ENCODE measurements at regions of chr10 and their contacts with region 1.

Region 1: GRCh38 chr10:17607603-17608332 is 9.4 kb downstream of the HACD1 start:
- DNase-seq: peak; percentile 45
- ATAC-seq: peak; percentile 88
- H3K4me3 ChIP-seq: no peak overlapping the region
- H3K27ac ChIP-seq: no peak overlapping the region
- H3K4me1 ChIP-seq: no peaks in the 10 kb centered on the region
- H3K27me3 ChIP-seq: no peaks in the 10 kb centered on the region
- CTCF ChIP-seq: peak; percentile 86
- EP300 ChIP-seq: no peak
- POLR2A ChIP-seq: no peak
- RAD21 ChIP-seq: peak; percentile 66

Region 2: GRCh38 chr10:17144757-17145156 is 463.0 kb before region 1 on chr10:
- CTCF ChIA-PET with region 1: no interaction called
- POLR2A ChIA-PET with region 1: no interaction called
- in situ Hi-C with region 1: no loop called
- intact Hi-C with region 1: no loop called
- DNase-seq: no peak
- ATAC-seq: no peak
- H3K4me3 ChIP-seq: no peak overlapping the region
- H3K27ac ChIP-seq: no peak overlapping the region
- H3K4me1 ChIP-seq: peaks cover 24% of the 10 kb centered on the region
- H3K27me3 ChIP-seq: no peaks in the 10 kb centered on the region
- CTCF ChIP-seq: no peak
- EP300 ChIP-seq: no peak
- POLR2A ChIP-seq: no peak
- RAD21 ChIP-seq: no peak

Region 3: DNA sequence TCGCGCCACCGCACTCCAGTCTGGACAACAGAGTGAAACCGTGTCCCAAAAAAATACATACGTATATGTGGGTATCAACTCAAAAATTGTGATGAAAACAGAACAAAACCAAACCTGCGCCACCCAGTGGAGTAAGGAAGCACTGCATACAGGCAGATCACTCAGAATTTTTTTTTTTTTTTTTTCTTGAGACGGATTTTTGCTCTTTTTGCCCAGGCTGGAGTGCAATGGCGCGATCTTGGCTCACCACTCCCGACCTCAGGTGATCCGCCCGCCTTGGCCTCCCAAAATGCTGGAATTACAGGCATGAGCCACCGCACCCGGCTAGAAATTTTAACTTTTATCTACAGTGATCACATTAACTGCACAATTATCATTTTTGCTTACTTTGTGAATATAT is 135.2 kb after region 1 on chr10:
- CTCF ChIA-PET with region 1: interaction called, 43 read pairs
- POLR2A ChIA-PET with region 1: no interaction called
- in situ Hi-C with region 1: loop called (anchors 5 kb)
- intact Hi-C with region 1: loop called (anchors 1 kb)
- DNase-seq: peak; percentile 30
- ATAC-seq: no peak
- H3K4me3 ChIP-seq: no peak overlapping the region
- H3K27ac ChIP-seq: no peak overlapping the region
- H3K4me1 ChIP-seq: peaks cover 17% of the 10 kb centered on the region
- H3K27me3 ChIP-seq: no peaks in the 10 kb centered on the region; a peak in 1 of 5 replicates
- CTCF ChIP-seq: peak; percentile 69
- EP300 ChIP-seq: no peak
- POLR2A ChIP-seq: no peak
- RAD21 ChIP-seq: peak; percentile 38; the same call in 1 of the 2 replicates

Region 4: DNA sequence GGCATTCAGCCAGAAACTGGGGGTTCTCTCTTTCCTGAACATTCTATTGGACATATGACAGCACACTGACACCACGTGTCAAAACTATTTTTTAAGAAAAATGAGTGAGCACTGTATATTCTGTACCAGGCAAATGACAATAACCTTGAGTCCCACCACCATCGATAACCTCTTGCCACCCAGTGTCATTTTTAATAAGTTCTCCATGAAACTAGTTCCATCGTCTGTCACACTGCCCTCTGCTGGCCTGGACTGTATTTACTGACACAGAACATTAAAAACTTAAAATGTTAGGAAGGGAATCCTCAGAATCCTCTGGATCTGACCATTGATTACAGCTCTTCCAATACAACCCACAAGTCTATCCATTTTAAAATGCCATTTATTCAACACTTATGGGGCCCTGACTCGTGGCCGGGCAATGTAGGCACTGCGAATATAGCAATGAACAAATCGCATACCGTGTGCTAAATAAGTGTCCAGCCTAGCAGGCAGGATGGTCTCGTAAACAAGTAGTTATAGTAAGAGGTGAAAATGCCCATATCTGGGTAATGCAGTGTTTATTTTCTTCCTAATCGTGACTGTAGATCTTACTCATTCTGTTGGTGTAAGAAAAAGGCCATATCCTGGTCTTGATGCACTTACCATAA is 496.6 kb after region 1 on chr10:
- CTCF ChIA-PET with region 1: interaction called, 17 read pairs
- POLR2A ChIA-PET with region 1: no interaction called
- in situ Hi-C with region 1: loop called (anchors 25 kb)
- intact Hi-C with region 1: loop called (anchors 1 kb)
- DNase-seq: peak; percentile 23
- ATAC-seq: peak; percentile 34; the same call in 1 of the 3 replicates
- H3K4me3 ChIP-seq: no peak overlapping the region
- H3K27ac ChIP-seq: no peak overlapping the region
- H3K4me1 ChIP-seq: no peaks in the 10 kb centered on the region
- H3K27me3 ChIP-seq: no peaks in the 10 kb centered on the region; a peak in 1 of 5 replicates
- CTCF ChIP-seq: peak; percentile 55
- EP300 ChIP-seq: no peak
- POLR2A ChIP-seq: no peak
- RAD21 ChIP-seq: no peak

Region 5: GRCh38 chr10:18214691-18215563 is 607.2 kb after region 1 on chr10:
- CTCF ChIA-PET with region 1: no interaction called
- POLR2A ChIA-PET with region 1: no interaction called
- in situ Hi-C with region 1: loop called (anchors 10 kb)
- intact Hi-C with region 1: loop called (anchors 10 kb)
- DNase-seq: peak; percentile 16
- ATAC-seq: peak; percentile 81
- H3K4me3 ChIP-seq: no peak overlapping the region
- H3K27ac ChIP-seq: no peak overlapping the region
- H3K4me1 ChIP-seq: no peaks in the 10 kb centered on the region
- H3K27me3 ChIP-seq: no peaks in the 10 kb centered on the region
- CTCF ChIP-seq: peak; percentile 76
- EP300 ChIP-seq: no peak
- POLR2A ChIP-seq: no peak
- RAD21 ChIP-seq: no peak

Measured in HepG2 (cell line).